Vagina (tissue), 2 donors: ENCODE measurements at regions of chr9 and their contacts with region 1.

Region 1: GRCh38 chr9:35035851-35036701 is 36.3 kb downstream of the VCP start:
- DNase-seq: no peak
- H3K4me3 ChIP-seq: peak overlapping the region; percentile 30 to 31
- H3K27ac ChIP-seq: peak overlapping the region; percentile 28
- H3K4me1 ChIP-seq: peaks cover 10% of the 10 kb centered on the region
- H3K27me3 ChIP-seq: no peaks in the 10 kb centered on the region
- CTCF ChIP-seq: no peak
- POLR2A ChIP-seq: no peak

Region 2: DNA sequence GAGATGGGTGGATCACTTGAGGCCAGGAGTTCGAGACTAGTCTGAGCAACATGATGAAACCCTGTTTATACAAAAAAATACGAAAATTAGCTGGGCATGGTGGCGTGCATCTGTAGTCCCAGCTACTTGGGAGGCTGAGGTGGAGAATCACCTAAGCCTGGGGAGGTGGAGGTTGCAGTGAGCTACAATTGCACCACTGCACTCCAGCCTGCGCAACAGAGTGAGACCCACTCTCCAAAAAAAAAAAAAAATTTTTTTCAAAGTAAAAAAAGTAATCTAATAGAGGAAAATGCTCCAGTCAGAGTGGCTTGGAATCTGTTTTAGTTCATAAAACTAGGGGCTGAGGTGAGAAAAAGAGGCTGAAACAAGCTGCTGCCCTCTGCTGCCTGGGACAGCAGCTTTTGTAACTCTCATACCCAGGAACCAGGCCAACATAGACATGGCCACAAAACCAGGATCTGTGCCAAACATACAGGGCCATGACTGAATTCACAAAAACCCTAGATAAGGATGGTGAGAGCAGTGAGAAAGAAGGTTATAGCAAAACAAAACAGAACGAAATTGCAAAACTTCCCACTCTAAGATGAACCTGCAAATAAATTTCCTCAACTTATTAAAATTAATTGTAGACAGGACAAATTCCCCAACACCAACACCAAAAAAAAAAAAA is 896.5 kb before region 1 on chr9:
- intact Hi-C with region 1: loop called (anchors 5 kb)
- DNase-seq: no peak
- H3K4me3 ChIP-seq: no peak overlapping the region
- H3K27ac ChIP-seq: no peak overlapping the region
- H3K4me1 ChIP-seq: no peaks in the 10 kb centered on the region
- H3K27me3 ChIP-seq: no peaks in the 10 kb centered on the region
- CTCF ChIP-seq: no peak
- POLR2A ChIP-seq: no peak

Region 3: DNA sequence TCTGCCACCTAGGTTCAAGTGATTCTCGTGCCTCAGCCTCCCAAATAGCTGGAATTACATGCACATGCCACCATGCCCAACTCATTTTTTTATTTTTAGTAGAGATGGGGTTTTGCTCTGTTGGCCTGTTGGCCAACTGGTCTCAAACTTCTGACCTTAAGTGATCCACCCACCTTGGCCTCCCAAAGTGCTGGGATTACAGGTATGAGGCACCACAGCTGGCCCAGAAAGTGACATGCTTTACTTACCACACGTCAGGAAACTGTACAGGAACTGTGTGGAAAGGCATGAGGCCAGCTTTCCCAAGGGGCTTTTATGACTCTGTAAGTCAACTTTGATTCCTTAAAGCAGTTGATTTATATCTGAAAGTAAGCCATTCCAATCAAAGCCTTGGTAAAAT is 21.6 kb before region 1 on chr9:
- intact Hi-C with region 1: no loop called
- DNase-seq: no peak
- H3K4me3 ChIP-seq: no peak overlapping the region
- H3K27ac ChIP-seq: no peak overlapping the region
- H3K4me1 ChIP-seq: no peaks in the 10 kb centered on the region
- H3K27me3 ChIP-seq: no peaks in the 10 kb centered on the region
- CTCF ChIP-seq: no peak
- POLR2A ChIP-seq: no peak